ENCODE measurements at regions of chr12 and their contacts with region 1.

Region 1: GRCh38 chr12:75480469-75480949 is at the start of gene GLIPR1:
- DNase-seq: peak in 1 of 2 experiments; percentile 30
- H3K4me3 ChIP-seq: no peak within 1 kb of the TSS
- H3K4me3 Mint-ChIP-seq: peak within 1 kb of the TSS; percentile 42
- H3K27ac Mint-ChIP-seq: peak within 1 kb of the TSS; percentile 10
- H3K4me1 ChIP-seq: peaks cover 8% of the 10 kb centered on the region; the same call in 1 of the 2 replicates
- H3K4me1 Mint-ChIP-seq: peaks cover 6% of the 10 kb centered on the region
- H3K27me3 ChIP-seq: no peaks in the 10 kb centered on the region
- H3K27me3 Mint-ChIP-seq: no peaks in the 10 kb centered on the region
- CTCF ChIP-seq: no peak
- total RNA-seq, gene GLIPR1: 1.9 and 3.9 TPM in 2 replicates

Region 2: DNA sequence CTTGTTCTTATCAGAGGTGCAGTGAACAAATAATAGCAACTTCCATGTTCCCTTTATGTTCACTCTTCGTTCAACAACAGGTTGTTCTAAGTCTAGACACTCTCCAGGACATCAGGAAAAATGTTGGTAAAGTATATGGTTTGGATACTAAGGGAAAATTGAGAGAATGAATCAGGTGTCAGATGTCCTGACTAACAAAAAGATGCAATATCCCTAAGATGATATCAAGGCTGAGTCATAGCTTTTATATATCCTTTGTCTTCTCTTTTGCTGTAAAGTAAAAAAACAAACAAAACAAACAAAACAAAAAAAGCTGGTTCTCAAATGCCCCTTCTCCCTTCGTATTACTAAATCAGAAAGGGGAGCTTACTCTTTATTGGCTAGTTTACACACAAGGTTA is 135.0 kb before region 1 on chr12:
- CTCF ChIA-PET with region 1: no interaction called
- POLR2A ChIA-PET with region 1: no interaction called
- intact Hi-C with region 1: loop called (anchors 5 kb)
- DNase-seq: no peak
- H3K4me3 ChIP-seq: no peak overlapping the region
- H3K4me3 Mint-ChIP-seq: no peak overlapping the region
- H3K27ac Mint-ChIP-seq: no peak overlapping the region
- H3K4me1 ChIP-seq: no peaks in the 10 kb centered on the region
- H3K4me1 Mint-ChIP-seq: no peaks in the 10 kb centered on the region
- H3K27me3 ChIP-seq: no peaks in the 10 kb centered on the region
- H3K27me3 Mint-ChIP-seq: no peaks in the 10 kb centered on the region
- CTCF ChIP-seq: no peak

Region 3: GRCh38 chr12:75591628-75592027 is 111.1 kb after region 1 on chr12:
- CTCF ChIA-PET with region 1: no interaction called
- POLR2A ChIA-PET with region 1: no interaction called
- intact Hi-C with region 1: no loop called
- DNase-seq: no peak
- H3K4me3 ChIP-seq: no peak overlapping the region
- H3K4me3 Mint-ChIP-seq: no peak overlapping the region
- H3K27ac Mint-ChIP-seq: no peak overlapping the region
- H3K4me1 ChIP-seq: no peaks in the 10 kb centered on the region; the same call in 1 of the 2 replicates
- H3K4me1 Mint-ChIP-seq: peaks cover 7% of the 10 kb centered on the region
- H3K27me3 ChIP-seq: no peaks in the 10 kb centered on the region
- H3K27me3 Mint-ChIP-seq: no peaks in the 10 kb centered on the region
- CTCF ChIP-seq: no peak